Heart left ventricle (tissue), 16 donors: ENCODE measurements at regions of chr20 and their contacts with region 1.

Region 1: GRCh38 chr20:57596998-57597939 is 23.0 kb downstream of the ZBP1 start:
- DNase-seq: peak; percentile 62 to 86 (median 74)
- ATAC-seq: peak; percentile 67 to 87 (median 80)
- H3K4me3 ChIP-seq: peak overlapping the region in 3 of 12 donors; percentile 20 to 27 (median 23)
- H3K27ac ChIP-seq: no peak overlapping the region
- H3K4me1 ChIP-seq: peaks cover 0 to 8% (median 5%) of the 10 kb centered on the region in 12 donors
- H3K27me3 ChIP-seq: peaks cover 0 to 5% (median 0%) of the 10 kb centered on the region in 9 donors
- CTCF ChIP-seq: peak; percentile 90 to 96 (median 94)
- POLR2A ChIP-seq: no peak

Region 2: DNA sequence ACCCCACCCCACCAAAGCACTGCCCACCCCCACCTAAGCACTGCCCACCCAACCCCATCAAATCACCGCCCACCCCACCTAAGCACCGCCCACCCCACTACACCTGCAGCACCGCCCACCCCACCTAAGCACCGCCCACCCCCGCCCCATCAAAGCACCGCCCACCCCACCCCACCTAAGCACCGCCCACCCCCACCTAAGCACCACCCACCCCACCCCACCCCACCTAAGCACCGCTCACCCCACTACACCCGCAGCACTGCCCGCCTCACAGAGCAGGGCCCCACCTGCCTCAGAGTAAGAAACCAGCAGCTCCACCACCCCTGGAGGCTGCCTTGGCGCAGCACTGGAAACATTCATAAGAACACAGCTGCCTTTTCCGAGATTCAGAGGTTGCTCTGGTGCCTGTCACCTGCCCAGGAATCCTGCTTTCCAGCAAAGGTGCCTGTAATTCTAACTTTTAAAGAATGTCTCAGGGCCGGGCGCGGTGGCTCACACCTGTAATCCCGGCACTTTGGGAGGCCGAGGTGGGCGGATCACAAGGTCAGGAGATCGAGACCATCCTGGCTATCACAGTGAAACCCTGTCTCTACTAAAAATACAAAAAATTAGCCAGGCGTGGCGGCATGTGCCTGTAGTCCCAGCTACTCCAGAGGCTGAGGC is 479.0 kb before region 1 on chr20:
- intact Hi-C with region 1: no loop called
- DNase-seq: no peak
- ATAC-seq: no peak
- H3K4me3 ChIP-seq: no peak overlapping the region
- H3K27ac ChIP-seq: no peak overlapping the region
- H3K4me1 ChIP-seq: no peaks in the 10 kb centered on the region
- H3K27me3 ChIP-seq: peaks cover 0 to 2% (median 0%) of the 10 kb centered on the region in 9 donors
- CTCF ChIP-seq: no peak
- POLR2A ChIP-seq: no peak

Region 3: GRCh38 chr20:57383447-57384347 is 213.6 kb before region 1 on chr20:
- intact Hi-C with region 1: loop called in 7 of 10 experiments (anchors 5 to 10 kb)
- DNase-seq: no peak
- ATAC-seq: no peak
- H3K4me3 ChIP-seq: no peak overlapping the region
- H3K27ac ChIP-seq: no peak overlapping the region
- H3K4me1 ChIP-seq: peaks cover 0 to 17% (median 13%) of the 10 kb centered on the region in 12 donors
- H3K27me3 ChIP-seq: no peaks in the 10 kb centered on the region
- CTCF ChIP-seq: no peak
- POLR2A ChIP-seq: no peak

Region 4: DNA sequence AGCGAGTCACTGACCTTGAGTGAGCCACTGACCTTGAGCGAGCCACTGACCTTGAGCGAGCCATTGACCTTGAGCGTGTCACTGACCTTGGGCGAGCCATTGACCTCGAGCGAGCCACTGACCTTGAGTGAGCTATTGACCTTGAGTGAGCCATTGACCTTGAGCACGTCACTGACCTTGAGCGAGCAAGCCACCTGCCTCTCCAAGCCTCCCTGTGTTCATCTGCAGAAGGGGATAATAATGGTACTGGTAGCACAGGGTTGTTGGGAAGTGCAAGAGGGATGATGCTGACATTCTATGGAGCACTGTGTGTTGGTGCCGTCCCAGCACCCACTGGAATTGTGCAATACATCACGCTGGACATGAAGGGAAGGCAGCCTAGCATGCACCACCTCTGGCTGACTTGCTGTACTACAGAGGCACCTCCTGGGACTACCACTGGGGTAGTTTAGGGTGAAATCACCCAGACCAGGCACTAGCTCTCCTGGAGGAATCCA is 132.5 kb before region 1 on chr20:
- intact Hi-C with region 1: no loop called
- DNase-seq: peak in 2 of 5 donors; percentile 36 to 55
- ATAC-seq: no peak
- H3K4me3 ChIP-seq: no peak overlapping the region
- H3K27ac ChIP-seq: no peak overlapping the region
- H3K4me1 ChIP-seq: peaks cover 0 to 41% (median 8%) of the 10 kb centered on the region in 12 donors
- H3K27me3 ChIP-seq: peaks cover 0 to 10% (median 0%) of the 10 kb centered on the region in 9 donors
- CTCF ChIP-seq: peak in 1 of 12 donors; percentile 31
- POLR2A ChIP-seq: no peak

Region 5: DNA sequence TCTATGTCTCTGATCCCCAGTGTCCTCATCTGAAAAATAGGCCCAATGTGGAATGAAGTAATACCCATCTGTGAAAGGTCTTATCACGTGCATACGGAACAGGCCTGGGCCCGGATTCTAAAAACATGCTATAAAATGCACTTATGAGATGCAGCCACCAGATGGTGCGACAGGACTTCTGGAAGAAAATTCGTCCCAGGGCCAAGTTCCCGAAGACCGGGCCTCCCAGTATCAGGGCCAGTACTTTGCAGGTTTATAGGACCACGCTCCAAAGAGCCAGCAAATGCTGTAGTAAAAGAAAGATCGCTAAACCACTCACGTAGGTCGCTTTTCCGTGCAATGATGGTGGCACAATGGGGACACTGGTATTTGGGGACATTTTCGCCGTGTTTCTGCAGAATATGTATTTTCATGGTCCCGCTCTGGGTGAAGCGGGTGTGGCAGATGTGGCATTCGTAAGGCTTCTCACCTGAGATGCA is 83.0 kb before region 1 on chr20:
- intact Hi-C with region 1: loop called in 9 of 10 experiments (anchors 1 to 2 kb)
- DNase-seq: peak in 4 of 5 donors; percentile 54 to 75 (median 64)
- ATAC-seq: peak; percentile 63 to 91 (median 86)
- H3K4me3 ChIP-seq: no peak overlapping the region
- H3K27ac ChIP-seq: no peak overlapping the region
- H3K4me1 ChIP-seq: peaks cover 0 to 7% (median 0%) of the 10 kb centered on the region in 12 donors
- H3K27me3 ChIP-seq: peaks cover 0 to 17% (median 0%) of the 10 kb centered on the region in 9 donors
- CTCF ChIP-seq: peak; percentile 58 to 86 (median 76)
- POLR2A ChIP-seq: no peak

Region 6: GRCh38 chr20:57707849-57708693 is 110.8 kb after region 1 on chr20:
- intact Hi-C with region 1: no loop called
- DNase-seq: peak in 1 of 5 donors; percentile 29
- ATAC-seq: peak; percentile 47 to 60 (median 58)
- H3K4me3 ChIP-seq: peak overlapping the region; percentile 33 to 96 (median 77)
- H3K27ac ChIP-seq: peak overlapping the region; percentile 26 to 98 (median 82)
- H3K4me1 ChIP-seq: peaks cover 0 to 68% (median 25%) of the 10 kb centered on the region in 12 donors
- H3K27me3 ChIP-seq: peaks cover 0 to 3% (median 0%) of the 10 kb centered on the region in 9 donors
- CTCF ChIP-seq: no peak
- POLR2A ChIP-seq: no peak

Region 7: GRCh38 chr20:58179432-58180099 is 582.3 kb after region 1 on chr20:
- intact Hi-C with region 1: loop called in 3 of 10 experiments (anchors 1 to 5 kb)
- DNase-seq: peak; percentile 39 to 82 (median 60)
- ATAC-seq: peak; percentile 12 to 82 (median 70)
- H3K4me3 ChIP-seq: peak overlapping the region in 9 of 12 donors; percentile 13 to 49 (median 27)
- H3K27ac ChIP-seq: peak overlapping the region in 1 of 12 donors; percentile 7
- H3K4me1 ChIP-seq: peaks cover 0 to 22% (median 11%) of the 10 kb centered on the region in 12 donors
- H3K27me3 ChIP-seq: peaks cover 0 to 16% (median 2%) of the 10 kb centered on the region in 9 donors
- CTCF ChIP-seq: peak; percentile 97 to 100 (median 99)
- POLR2A ChIP-seq: no peak